HEK293 (cell line): ENCODE measurements at regions of chr5 and their contacts with region 1.

Region 1: DNA sequence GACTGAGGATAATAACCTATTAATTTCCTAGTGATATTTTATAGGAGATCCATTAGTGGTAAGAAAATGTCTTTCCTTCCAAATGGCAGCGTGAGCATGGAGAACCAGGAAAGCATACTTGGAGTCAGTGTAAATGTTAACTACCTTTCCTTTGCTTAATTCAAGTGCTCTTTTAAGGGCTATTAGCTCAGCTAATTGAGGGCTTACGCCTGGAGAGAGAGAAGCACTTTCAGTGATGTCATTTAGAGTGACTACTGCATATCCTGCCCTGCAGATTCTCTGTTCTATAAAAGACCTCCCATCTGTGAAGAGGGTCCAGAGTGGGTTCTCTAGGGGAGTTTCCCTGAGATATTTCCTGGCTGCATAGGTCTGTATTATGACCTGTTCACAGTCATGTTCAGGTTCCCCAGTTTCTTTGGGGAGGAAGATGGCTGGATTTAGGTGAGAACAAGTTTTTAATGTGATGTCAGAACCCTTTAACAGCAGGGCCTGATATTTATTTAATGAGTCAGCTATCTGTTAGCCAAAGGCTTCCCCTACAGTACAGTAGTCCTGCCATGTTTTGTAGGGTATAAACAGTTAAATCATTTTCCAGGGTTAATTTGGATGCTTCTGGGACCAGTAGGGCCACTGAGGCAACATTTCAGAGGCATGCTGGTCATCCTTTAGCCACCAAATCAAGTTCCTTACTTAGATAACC is 89.6 kb downstream of the TRIM36 start:
- H3K4me3 ChIP-seq: no peak overlapping the region
- H3K27ac ChIP-seq: no peak overlapping the region
- H3K4me1 ChIP-seq: no peaks in the 10 kb centered on the region
- CTCF ChIP-seq: no peak

Region 2: GRCh38 chr5:115069087-115069968 is 10.7 kb before region 1 on chr5:
- CTCF ChIA-PET with region 1: interaction called, 10 read pairs
- POLR2A ChIA-PET with region 1: no interaction called
- H3K4me3 ChIP-seq: no peak overlapping the region
- H3K27ac ChIP-seq: no peak overlapping the region
- H3K4me1 ChIP-seq: no peaks in the 10 kb centered on the region
- CTCF ChIP-seq: peak; percentile 55